Common myeloid progenitor, CD34-positive (primary cell): ENCODE measurements at regions of chr3 and their contacts with region 1.

Region 1: GRCh38 chr3:9384141-9384853 is 13.1 kb upstream of the SETD5 start:
- DNase-seq: no peak
- H3K4me3 ChIP-seq: no peak overlapping the region
- H3K27ac ChIP-seq: no peak overlapping the region
- H3K4me1 ChIP-seq: no peaks in the 10 kb centered on the region
- H3K27me3 ChIP-seq: no peaks in the 10 kb centered on the region

Region 2: DNA sequence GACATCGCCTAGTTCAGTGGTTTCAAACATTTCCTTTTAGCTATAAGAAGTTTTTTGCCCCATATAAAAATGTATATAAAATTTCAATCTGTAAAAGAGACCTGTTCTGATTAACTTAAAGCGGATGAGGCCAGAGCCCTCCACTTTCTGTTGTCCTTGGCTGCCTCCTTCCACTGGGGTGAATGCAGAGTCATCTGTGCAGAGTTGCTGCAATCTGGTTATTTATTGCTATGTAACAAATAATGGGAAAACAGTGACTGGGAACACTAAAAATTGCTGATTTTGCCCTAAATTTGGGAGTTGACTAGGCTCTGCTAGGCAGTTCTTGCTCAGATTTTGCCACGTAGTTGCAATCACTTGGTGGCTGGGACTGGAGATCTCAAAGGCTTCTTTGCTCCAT is 1885.6 kb before region 1 on chr3:
- CTCF ChIA-PET with region 1: no interaction called
- POLR2A ChIA-PET with region 1: no interaction called
- DNase-seq: no peak
- H3K4me3 ChIP-seq: no peak overlapping the region
- H3K27ac ChIP-seq: no peak overlapping the region
- H3K4me1 ChIP-seq: no peaks in the 10 kb centered on the region
- H3K27me3 ChIP-seq: no peaks in the 10 kb centered on the region

Region 3: DNA sequence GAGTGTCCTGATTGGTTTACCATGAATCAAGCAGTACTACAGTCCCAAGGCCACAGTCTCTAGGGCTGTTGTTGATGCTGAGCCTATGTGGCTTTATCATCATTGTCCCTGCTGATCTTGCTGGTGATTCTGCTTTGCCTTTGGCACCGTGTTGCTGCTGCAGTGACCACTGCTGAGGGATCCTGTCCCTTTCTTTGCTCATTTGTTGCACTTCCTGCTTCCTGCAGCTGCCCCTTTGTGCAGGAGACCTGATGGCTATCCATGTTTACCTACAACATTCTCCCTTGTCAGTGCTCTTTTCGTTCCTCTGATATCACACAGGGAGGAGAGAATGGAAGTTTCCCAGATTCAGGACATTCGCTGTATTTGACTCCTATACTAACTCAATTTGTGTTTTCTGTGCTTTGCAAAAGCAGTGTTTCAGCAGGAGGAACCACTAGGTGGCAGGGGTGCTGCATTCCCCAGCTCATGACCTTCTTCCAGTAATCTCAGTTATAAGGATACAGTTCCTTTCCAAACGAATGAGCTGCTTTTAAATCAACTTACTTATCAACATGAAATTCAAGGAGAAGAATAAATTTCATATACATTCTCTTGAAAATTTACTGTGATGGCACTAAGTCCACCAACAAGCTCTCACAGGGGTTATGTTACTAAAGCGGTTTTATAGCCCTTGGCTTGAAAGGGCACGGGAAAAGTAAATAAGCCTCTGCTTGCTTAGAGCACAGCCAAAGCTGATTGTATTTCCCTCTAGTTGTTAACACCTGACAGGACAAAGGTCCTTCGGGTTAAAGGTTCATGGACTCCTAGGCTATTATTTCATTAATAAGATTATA is 31.2 kb before region 1 on chr3:
- CTCF ChIA-PET with region 1: interaction called, 11 read pairs
- POLR2A ChIA-PET with region 1: no interaction called
- DNase-seq: peak; percentile 74 to 80 (median 77)
- H3K4me3 ChIP-seq: peak overlapping the region in 2 of 7 experiments; percentile 5 to 19
- H3K27ac ChIP-seq: peak overlapping the region in 1 of 2 experiments; percentile 37
- H3K4me1 ChIP-seq: peaks cover 5 to 27% (median 24%) of the 10 kb centered on the region in 4 experiments
- H3K27me3 ChIP-seq: no peaks in the 10 kb centered on the region

Region 4: DNA sequence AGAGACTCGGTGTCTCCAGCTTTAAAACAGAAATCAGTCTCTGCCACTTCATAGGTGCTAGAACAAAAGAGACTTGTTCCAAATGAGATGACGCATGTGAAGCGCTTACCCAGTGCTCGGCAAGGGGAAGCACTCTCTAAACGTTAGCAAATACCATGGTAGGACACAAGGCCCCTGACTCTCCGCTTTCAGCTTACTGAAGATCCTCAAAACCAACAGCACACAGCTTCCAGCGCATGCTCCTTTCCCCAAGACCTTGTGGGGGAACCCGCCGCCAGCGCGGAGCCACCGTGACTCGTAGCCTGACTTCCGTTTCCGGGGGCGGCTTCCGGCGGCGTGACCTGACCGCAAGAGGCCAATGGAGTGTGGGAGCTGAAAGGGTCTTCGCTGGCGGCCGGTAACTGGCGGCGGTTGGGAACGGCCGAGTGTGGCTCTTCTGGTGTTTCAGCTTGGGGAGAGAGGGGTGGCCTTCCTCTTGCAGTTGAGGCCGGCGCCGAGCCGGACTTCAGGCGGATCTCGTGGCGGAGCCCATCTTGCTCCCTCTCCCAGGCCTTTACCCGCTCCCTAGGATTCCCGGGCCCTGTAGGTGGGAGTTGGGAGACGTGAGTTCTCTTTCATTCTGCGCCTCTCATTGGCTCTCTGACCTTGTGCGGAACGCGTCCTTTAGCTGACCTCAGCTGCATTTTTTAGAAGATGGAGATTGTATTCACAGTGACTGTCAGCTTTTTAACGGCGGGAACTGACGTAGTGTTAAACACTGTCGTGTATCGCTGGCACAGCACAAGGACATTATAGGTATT is 21.4 kb before region 1 on chr3 and contains the start of gene THUMPD3:
- CTCF ChIA-PET with region 1: interaction called, 12 read pairs
- POLR2A ChIA-PET with region 1: interaction called, 4 read pairs
- DNase-seq: peak; percentile 96 to 99 (median 98)
- H3K4me3 ChIP-seq: peak within 1 kb of the TSS; percentile 62 to 88 (median 81)
- H3K27ac ChIP-seq: peak within 1 kb of the TSS; percentile 95 to 98
- H3K4me1 ChIP-seq: peaks cover 9 to 14% (median 11%) of the 10 kb centered on the region in 4 experiments
- H3K27me3 ChIP-seq: no peaks in the 10 kb centered on the region